ENCODE measurements at regions of chr19 and their contacts with region 1.

Region 1: GRCh38 chr19:41327576-41328156 is 17.7 kb downstream of the CCDC97 start:
- DNase-seq: peak; percentile 68
- H3K4me3 Mint-ChIP-seq: peak overlapping the region; percentile 73
- H3K27ac Mint-ChIP-seq: peak overlapping the region; percentile 92
- H3K4me1 Mint-ChIP-seq: peaks cover 50% of the 10 kb centered on the region
- H3K27me3 Mint-ChIP-seq: no peaks in the 10 kb centered on the region

Region 2: DNA sequence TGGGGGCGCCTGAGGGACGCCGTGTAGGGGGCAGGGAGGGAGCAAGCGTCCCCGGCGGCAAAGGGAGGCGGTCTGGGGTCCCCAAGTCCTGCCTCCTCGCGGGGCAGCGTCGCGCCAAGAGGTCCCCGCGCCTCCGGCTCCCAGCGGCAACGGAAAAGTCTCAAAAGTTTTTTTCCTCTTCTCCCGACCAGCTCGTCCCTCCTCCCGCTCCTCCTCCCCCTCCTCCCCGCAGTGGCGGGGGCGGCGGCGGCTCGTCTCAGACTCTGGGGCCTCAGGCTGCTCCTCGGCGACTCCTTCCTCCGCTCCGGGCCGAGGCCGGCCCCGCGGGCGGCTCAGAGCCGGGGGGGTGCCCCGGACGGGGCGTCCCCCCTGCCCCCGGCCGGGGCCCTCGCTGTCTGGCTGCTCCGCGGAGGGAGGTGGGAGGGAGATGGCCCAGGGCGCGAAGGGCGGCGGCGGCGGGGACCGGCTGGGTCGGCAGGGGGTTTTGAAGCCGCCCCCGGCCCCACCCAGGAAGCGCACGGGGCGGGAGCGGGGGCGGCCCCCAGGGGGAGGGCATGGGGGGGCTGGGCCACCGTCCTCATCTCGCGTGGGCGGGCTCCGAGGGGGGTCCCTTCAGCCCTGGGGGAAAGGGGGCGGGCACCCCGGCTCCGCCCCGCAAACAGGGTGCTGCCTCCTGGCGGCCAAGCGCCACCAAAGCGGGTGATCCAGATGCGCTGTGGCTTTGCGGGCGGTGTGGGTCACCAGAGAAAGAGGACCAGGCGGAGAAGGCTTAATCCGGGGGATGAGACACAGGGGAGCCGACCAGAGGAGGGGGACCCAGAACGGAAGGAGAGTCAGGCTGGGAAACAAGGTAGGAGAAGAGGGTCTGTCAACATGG is 26.0 kb after region 1 on chr19 and contains the start of gene TGFB1:
- intact Hi-C with region 1: loop called (anchors 1 kb)
- DNase-seq: peak; percentile 90
- H3K4me3 Mint-ChIP-seq: peak within 1 kb of the TSS; percentile 100
- H3K27ac Mint-ChIP-seq: peak within 1 kb of the TSS; percentile 91
- H3K4me1 Mint-ChIP-seq: peaks cover 52% of the 10 kb centered on the region
- H3K27me3 Mint-ChIP-seq: no peaks in the 10 kb centered on the region
- total RNA-seq, gene TGFB1: 125 and 126 TPM in 2 replicates

Region 3: DNA sequence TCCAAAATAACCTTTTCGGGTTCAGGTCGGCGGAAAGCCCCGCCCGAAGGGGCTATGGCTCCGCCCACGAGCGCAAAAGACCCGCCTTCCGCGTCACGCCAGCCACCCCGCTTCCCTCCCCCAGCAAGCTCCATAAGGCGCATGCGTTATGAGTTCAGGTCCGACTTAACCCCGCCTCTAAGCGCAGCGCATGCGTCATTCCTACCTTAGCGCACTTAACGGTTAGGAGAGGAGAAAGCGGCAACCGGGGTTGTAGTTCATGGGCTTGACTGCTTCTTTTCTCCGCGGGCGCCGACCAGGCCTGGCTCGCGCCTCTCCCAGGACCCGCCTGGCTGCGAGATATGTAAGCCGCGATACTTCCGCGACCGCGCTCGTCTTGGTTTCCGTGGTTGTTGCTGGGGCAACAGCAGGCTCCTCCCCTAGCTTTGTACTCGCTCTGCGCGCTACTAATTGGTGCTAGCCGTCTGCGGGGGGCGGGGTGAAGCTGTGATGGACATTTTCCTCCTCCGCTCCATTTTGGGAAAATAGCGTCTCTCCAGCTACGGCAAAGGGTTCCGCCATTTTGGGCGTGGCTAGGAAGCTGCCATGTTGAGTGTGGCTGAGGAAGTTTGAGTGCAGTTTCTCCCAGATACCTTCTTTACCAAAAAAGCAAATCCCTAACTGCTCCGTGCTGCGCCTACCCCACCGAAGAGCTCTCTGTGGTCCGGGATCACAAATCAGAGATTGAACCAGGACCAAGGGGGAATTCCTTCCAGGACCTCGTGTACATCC is 36.3 kb after region 1 on chr19 and contains the start of gene B9D2:
- intact Hi-C with region 1: no loop called
- DNase-seq: peak; percentile 98
- H3K4me3 Mint-ChIP-seq: peak within 1 kb of the TSS; percentile 84
- H3K27ac Mint-ChIP-seq: peak within 1 kb of the TSS; percentile 91
- H3K4me1 Mint-ChIP-seq: peaks cover 28% of the 10 kb centered on the region
- H3K27me3 Mint-ChIP-seq: no peaks in the 10 kb centered on the region
- total RNA-seq, gene B9D2: 6.2 TPM in 2 replicates

Measured in activated T-helper 2 cell treated with anti-CD3 and anti-CD28 coated beads, Interferon-gamma antibody, Interleukin-2, Interleukin-4, amounts not matched to agents 10 μg/mL and 5 μg/mL and 100 μg/mL, durations not matched to agents 14 hours and 24 hours and 36 hours (primary cell).